SK-N-SH (cell line): ENCODE measurements at regions of chr7 and their contacts with region 1.

Region 1: GRCh38 chr7:80060218-80060806 is 74.3 kb upstream of the GNAI1 start:
- DNase-seq: peak; percentile 44
- H3K4me3 ChIP-seq: no peak overlapping the region
- H3K27ac ChIP-seq: no peak overlapping the region
- H3K4me1 ChIP-seq: peaks cover 0 to 3% of the 10 kb centered on the region in 2 experiments; a peak in 2 of 4 replicates
- H3K27me3 ChIP-seq: no peaks in the 10 kb centered on the region
- CTCF ChIP-seq: peak; percentile 87
- EP300 ChIP-seq: no peak
- RAD21 ChIP-seq: peak; percentile 83

Region 2: DNA sequence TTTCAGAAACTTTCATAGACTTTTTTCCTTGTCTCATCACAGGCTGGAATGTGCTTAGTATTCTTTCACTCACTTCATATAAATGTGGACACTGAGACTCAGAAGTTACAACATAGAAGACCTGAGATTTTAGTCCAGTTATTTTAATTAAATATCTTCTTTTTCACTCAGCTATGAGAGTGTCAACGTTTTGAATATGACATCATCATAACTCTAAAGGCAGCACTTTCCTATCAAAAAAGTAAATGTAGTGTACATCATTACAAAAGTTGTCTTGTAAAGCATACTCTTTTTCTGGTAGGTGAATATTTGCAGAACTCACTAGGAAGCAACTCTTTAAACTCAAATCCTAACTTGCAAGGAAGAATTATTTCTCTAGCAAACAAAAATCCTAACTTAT is 217.6 kb before region 1 on chr7:
- CTCF ChIA-PET with region 1: no interaction called
- POLR2A ChIA-PET with region 1: no interaction called
- DNase-seq: no peak
- H3K4me3 ChIP-seq: no peak overlapping the region
- H3K27ac ChIP-seq: no peak overlapping the region
- H3K4me1 ChIP-seq: no peaks in the 10 kb centered on the region; a peak in 1 of 4 replicates
- H3K27me3 ChIP-seq: no peaks in the 10 kb centered on the region
- CTCF ChIP-seq: no peak
- EP300 ChIP-seq: no peak
- RAD21 ChIP-seq: no peak

Region 3: DNA sequence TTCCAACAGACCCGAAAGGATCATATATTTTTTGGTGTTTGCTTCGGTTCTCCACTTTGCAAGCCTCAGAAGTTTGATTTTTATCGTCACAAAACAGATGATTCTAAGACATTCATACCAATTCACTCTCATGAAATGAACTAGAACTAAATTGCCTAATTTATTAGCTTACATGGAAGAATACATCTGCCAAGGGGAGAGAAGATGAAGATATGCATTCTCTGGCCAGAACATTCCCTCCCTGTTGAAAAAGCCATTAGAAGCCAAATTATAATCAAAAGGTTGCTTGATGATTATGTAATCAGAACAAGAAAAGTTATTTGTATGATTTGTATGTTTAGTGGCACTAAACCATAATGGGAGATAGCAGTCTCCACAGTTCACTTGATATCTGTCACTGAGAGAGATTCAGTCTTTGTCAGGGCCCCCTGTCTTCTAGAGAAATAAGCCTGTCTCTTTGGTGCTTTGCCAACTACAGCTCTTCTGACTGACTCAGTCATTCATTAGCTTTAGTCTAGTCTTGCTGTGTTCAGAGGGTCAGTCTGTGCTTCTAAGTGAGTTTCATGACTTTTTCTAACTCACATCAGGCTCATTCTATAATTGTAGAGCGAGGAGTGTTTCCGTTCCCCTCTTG is 20.9 kb before region 1 on chr7:
- CTCF ChIA-PET with region 1: interaction called, 18 read pairs
- POLR2A ChIA-PET with region 1: no interaction called
- DNase-seq: no peak
- H3K4me3 ChIP-seq: no peak overlapping the region
- H3K27ac ChIP-seq: no peak overlapping the region; a peak in 1 of 4 replicates
- H3K4me1 ChIP-seq: no peaks in the 10 kb centered on the region; a peak in 1 of 4 replicates
- H3K27me3 ChIP-seq: no peaks in the 10 kb centered on the region
- CTCF ChIP-seq: no peak
- EP300 ChIP-seq: no peak
- RAD21 ChIP-seq: no peak

Region 4: GRCh38 chr7:80070391-80070790 is 10.1 kb after region 1 on chr7:
- CTCF ChIA-PET with region 1: interaction called, 35 read pairs
- POLR2A ChIA-PET with region 1: no interaction called
- DNase-seq: no peak
- H3K4me3 ChIP-seq: no peak overlapping the region
- H3K27ac ChIP-seq: no peak overlapping the region
- H3K4me1 ChIP-seq: no peaks in the 10 kb centered on the region
- H3K27me3 ChIP-seq: no peaks in the 10 kb centered on the region
- CTCF ChIP-seq: no peak
- EP300 ChIP-seq: no peak
- RAD21 ChIP-seq: no peak

Region 5: GRCh38 chr7:80087051-80087770 is 26.9 kb after region 1 on chr7:
- CTCF ChIA-PET with region 1: interaction called, 15 read pairs
- POLR2A ChIA-PET with region 1: no interaction called
- DNase-seq: no peak
- H3K4me3 ChIP-seq: no peak overlapping the region
- H3K27ac ChIP-seq: peak overlapping the region; percentile 21 to 80; a peak in 2 of 4 replicates
- H3K4me1 ChIP-seq: peaks cover 4 to 14% of the 10 kb centered on the region in 2 experiments; a peak in 2 of 4 replicates
- H3K27me3 ChIP-seq: no peaks in the 10 kb centered on the region
- CTCF ChIP-seq: no peak
- EP300 ChIP-seq: no peak
- RAD21 ChIP-seq: no peak

Region 6: DNA sequence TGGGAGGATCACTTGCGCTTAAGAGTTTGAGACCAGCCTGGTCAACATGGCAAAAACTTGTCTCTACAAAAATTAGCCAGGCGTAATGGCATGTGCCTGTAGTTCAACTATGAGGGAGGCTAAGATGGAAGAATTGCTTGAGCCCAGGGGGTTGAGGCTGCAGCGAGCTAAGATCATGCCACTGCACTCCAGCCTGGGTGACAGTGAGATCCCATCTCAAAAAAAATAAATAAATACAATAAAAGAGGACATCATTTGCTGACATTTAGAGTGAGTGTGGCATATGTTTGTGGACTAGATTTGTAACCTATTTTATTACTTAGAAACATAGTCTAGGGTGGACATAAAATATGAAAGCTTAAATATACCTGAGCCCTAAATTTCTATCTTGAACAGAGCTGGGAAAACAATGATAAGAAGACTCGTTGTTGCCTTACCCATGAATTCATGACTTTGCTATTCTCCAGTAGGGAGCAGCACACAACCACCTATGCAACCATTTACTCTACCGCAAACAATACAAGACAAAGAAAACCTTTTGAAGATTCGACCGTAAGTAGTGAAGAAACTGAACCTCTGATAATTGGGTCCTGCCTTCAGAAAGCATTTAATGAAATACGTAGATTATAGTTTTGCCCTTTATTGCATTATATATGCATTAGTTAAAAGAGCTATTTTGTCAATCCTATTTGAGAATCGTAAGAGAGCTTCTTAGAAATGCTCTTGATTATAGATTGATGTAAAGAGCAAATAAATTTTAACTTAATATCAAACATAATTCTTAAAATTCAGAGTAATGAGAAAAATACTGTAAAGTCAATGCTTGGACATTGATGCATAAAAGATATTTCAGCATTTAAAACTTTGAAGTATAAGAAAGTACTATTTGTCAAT is 368.1 kb after region 1 on chr7:
- CTCF ChIA-PET with region 1: interaction called, 19 read pairs
- POLR2A ChIA-PET with region 1: no interaction called
- DNase-seq: peak; percentile 37
- H3K4me3 ChIP-seq: no peak overlapping the region
- H3K27ac ChIP-seq: peak overlapping the region in 1 of 2 experiments; percentile 38; a peak in 1 of 4 replicates
- H3K4me1 ChIP-seq: no peaks in the 10 kb centered on the region
- H3K27me3 ChIP-seq: no peaks in the 10 kb centered on the region
- CTCF ChIP-seq: peak; percentile 85
- EP300 ChIP-seq: no peak
- RAD21 ChIP-seq: peak; percentile 93